Activated CD8-positive, alpha-beta T cell treated with anti-CD3 and anti-CD28 coated beads, Interleukin-2, amount 10 ng/mL, durations not matched to agents 7 days and 5 days (primary cell): ENCODE measurements at regions of chr5 and their contacts with region 1.

Region 1: GRCh38 chr5:67165526-67166459 is 30.8 kb downstream of the CD180 start:
- DNase-seq: peak; percentile 94
- ATAC-seq: peak; percentile 88
- H3K4me3 Mint-ChIP-seq: peak overlapping the region; percentile 90
- H3K27ac Mint-ChIP-seq: peak overlapping the region; percentile 99
- H3K4me1 Mint-ChIP-seq: peaks cover 67% of the 10 kb centered on the region
- H3K27me3 Mint-ChIP-seq: no peaks in the 10 kb centered on the region

Region 2: GRCh38 chr5:67182301-67182790 is 16.6 kb after region 1 on chr5:
- CTCF ChIA-PET with region 1: interaction called, 16 read pairs
- POLR2A ChIA-PET with region 1: interaction called, 42 read pairs
- DNase-seq: no peak
- ATAC-seq: peak; percentile 21
- H3K4me3 Mint-ChIP-seq: peak overlapping the region; percentile 49
- H3K27ac Mint-ChIP-seq: peak overlapping the region; percentile 85
- H3K4me1 Mint-ChIP-seq: peaks cover 70% of the 10 kb centered on the region
- H3K27me3 Mint-ChIP-seq: no peaks in the 10 kb centered on the region

Region 3: GRCh38 chr5:67200809-67201562 is 35.2 kb after region 1 on chr5:
- CTCF ChIA-PET with region 1: interaction called, 441 read pairs
- POLR2A ChIA-PET with region 1: interaction called, 177 read pairs
- DNase-seq: no peak
- ATAC-seq: peak; percentile 71
- H3K4me3 Mint-ChIP-seq: no peak overlapping the region
- H3K27ac Mint-ChIP-seq: peak overlapping the region; percentile 61
- H3K4me1 Mint-ChIP-seq: peaks cover 92% of the 10 kb centered on the region
- H3K27me3 Mint-ChIP-seq: no peaks in the 10 kb centered on the region

Region 4: GRCh38 chr5:67215583-67216471 is 50.0 kb after region 1 on chr5:
- CTCF ChIA-PET with region 1: interaction called, 441 read pairs
- POLR2A ChIA-PET with region 1: interaction called, 33 read pairs
- DNase-seq: peak; percentile 85
- ATAC-seq: peak; percentile 99
- H3K4me3 Mint-ChIP-seq: peak overlapping the region; percentile 67
- H3K27ac Mint-ChIP-seq: peak overlapping the region; percentile 99
- H3K4me1 Mint-ChIP-seq: peaks cover 68% of the 10 kb centered on the region
- H3K27me3 Mint-ChIP-seq: no peaks in the 10 kb centered on the region